ENCODE measurements at regions of chr6 and their contacts with region 1.

Region 1: DNA sequence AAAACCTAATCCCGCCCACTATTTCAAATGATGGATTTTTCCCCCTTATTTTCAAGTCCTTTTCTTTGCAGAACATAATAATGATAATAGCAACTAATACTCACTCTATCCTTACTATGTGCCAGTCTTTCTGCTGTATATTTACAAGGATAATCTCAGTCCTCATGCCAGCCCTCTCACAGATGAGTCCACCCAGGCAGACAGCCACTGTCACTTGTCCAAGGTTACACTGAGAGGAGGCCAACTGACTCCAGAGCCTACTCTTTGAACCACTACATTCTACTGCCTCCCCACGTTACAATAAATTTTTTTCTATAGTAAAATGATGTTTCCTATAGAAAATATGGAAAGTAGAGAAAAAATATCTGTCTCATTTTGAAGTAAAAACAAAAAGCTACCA is 30.9 kb downstream of the ELOVL5 start:
- DNase-seq: no peak
- H3K4me3 ChIP-seq: no peak overlapping the region
- H3K27ac ChIP-seq: no peak overlapping the region
- H3K4me1 ChIP-seq: peaks cover 29% of the 10 kb centered on the region
- H3K27me3 ChIP-seq: no peaks in the 10 kb centered on the region
- CTCF ChIP-seq: no peak
- POLR2A ChIP-seq: no peak

Region 2: GRCh38 chr6:53338304-53338703 is 20.4 kb after region 1 on chr6:
- CTCF ChIA-PET with region 1: interaction called, 6 read pairs
- POLR2A ChIA-PET with region 1: no interaction called
- dilution Hi-C with region 1: no loop called
- intact Hi-C with region 1: loop called (anchors 2 kb)
- DNase-seq: no peak
- H3K4me3 ChIP-seq: no peak overlapping the region
- H3K27ac ChIP-seq: no peak overlapping the region
- H3K4me1 ChIP-seq: peaks cover 7% of the 10 kb centered on the region
- H3K27me3 ChIP-seq: no peaks in the 10 kb centered on the region
- CTCF ChIP-seq: no peak
- POLR2A ChIP-seq: no peak

Region 3: DNA sequence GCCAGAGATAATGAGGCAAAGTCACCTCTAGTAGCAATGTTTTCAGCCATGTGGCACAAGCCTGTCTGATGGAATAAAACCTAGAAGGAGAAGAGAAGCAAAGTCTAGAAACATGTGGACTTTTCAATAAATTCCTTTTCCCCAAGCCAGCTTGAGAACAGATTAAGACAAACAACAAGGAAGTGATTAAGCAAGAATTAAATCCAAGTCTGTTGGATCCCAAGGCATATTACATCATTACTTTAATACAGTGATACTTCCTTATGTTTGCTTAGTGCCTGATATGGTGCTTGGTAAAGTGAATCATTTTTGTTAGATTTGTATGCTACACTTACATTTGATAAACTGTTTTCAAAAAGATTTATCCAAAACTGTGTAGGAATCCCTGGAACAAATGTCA is 1268.4 kb after region 1 on chr6:
- CTCF ChIA-PET with region 1: no interaction called
- POLR2A ChIA-PET with region 1: no interaction called
- dilution Hi-C with region 1: no loop called
- intact Hi-C with region 1: no loop called
- DNase-seq: peak; percentile 19
- H3K4me3 ChIP-seq: no peak overlapping the region
- H3K27ac ChIP-seq: no peak overlapping the region
- H3K4me1 ChIP-seq: no peaks in the 10 kb centered on the region
- H3K27me3 ChIP-seq: no peaks in the 10 kb centered on the region
- CTCF ChIP-seq: no peak
- POLR2A ChIP-seq: no peak